Gastrocnemius medialis (tissue), 4 donors: ENCODE measurements at regions of chr9 and their contacts with region 1.

Region 1: GRCh38 chr9:15135164-15135792 is 171.7 kb downstream of the TTC39B start:
- DNase-seq: peak; percentile 20 to 44
- ATAC-seq: peak; percentile 89 to 92
- H3K4me3 ChIP-seq: peak overlapping the region; percentile 8 to 37 (median 31)
- H3K27ac ChIP-seq: no peak overlapping the region
- H3K4me1 ChIP-seq: no peaks in the 10 kb centered on the region
- H3K27me3 ChIP-seq: no peaks in the 10 kb centered on the region
- CTCF ChIP-seq: peak; percentile 69 to 92 (median 84)
- POLR2A ChIP-seq: no peak

Region 2: DNA sequence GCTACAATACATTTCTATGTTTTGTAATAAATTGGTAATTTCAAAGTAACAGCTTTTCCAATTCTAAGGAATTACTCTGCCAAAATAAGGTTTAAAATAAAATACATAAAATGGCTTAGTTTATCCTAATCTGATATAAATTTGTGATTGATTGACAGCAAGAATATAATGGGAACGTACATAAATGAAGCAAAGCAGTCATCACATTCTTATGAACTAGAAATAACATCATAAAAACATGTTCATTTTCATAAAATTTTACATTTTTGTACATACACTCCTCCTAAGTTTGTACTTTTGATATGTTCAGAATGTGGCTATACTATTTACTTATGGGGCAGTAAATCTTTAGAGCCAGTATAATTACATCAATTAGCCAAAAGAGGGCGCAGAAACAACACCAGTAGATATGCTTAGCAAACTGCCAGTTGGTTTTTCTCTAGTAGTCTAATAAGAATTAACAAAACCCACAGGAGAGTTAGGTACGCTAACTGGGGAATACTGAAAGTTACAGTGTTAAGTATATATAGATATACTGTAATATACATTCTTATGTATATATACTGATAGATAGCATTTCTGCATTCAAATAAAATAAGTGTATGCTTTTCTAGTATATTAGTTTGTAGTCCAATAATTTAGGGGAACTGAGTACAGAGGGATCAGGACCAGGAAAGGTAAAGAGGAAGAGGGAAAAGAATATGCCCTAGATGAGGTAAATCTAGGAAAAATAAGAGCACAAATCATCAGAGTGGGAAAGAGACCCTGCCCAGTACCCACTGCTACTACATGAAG is 518.9 kb before region 1 on chr9:
- in situ Hi-C with region 1: loop called in 1 of 4 experiments (anchors 25 kb)
- intact Hi-C with region 1: loop called (anchors 5 kb)
- DNase-seq: no peak
- ATAC-seq: peak in 1 of 2 donors; percentile 61
- H3K4me3 ChIP-seq: no peak overlapping the region
- H3K27ac ChIP-seq: no peak overlapping the region
- H3K4me1 ChIP-seq: no peaks in the 10 kb centered on the region
- H3K27me3 ChIP-seq: no peaks in the 10 kb centered on the region
- CTCF ChIP-seq: peak in 4 of 5 experiments; percentile 38 to 66 (median 46)
- POLR2A ChIP-seq: no peak

Region 3: DNA sequence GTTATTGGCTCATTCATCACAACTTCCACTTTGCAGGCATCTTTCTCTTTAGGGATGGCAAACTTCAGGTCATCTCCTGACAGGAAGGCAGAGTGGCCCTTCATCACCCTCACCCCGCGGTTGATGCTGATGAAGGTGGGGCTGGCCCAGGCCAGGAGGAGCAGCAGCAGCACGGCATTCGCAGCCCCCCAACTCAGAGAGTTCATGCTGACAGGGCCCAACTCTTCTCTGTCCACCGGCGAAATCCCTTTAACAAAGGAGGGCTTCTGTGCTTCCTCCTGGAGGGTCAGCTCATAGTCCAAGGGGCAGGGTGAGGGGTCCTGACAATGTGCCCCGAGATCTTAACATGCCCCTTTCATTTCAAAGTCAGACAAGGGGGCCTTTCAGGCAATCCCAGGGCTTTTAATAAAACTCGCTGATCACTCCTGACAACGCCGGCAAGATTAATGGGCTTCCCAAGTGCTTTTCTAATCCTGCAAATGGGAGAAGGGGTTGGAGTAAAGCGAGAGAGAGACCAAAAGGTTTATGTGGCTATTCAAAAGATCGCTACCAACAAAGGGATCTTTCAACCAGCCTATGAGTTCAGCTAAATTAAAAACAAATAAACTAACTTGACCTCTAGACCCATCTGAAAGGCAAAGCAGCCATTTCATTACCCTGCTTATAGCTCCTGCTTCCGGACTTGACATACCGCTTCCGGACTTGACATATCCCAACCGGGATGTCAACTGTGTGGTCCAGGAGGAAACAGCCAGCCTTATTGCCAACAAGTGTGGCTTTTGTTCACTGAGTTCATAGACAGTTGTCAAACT is 266.3 kb before region 1 on chr9:
- in situ Hi-C with region 1: loop called in 1 of 4 experiments (anchors 25 kb)
- intact Hi-C with region 1: loop called (anchors 10 kb)
- DNase-seq: no peak
- ATAC-seq: no peak
- H3K4me3 ChIP-seq: no peak overlapping the region
- H3K27ac ChIP-seq: no peak overlapping the region
- H3K4me1 ChIP-seq: no peaks in the 10 kb centered on the region
- H3K27me3 ChIP-seq: no peaks in the 10 kb centered on the region
- CTCF ChIP-seq: no peak
- POLR2A ChIP-seq: no peak

Region 4: GRCh38 chr9:15032860-15033259 is 102.4 kb before region 1 on chr9:
- in situ Hi-C with region 1: loop called in 1 of 4 experiments (anchors 25 kb)
- intact Hi-C with region 1: no loop called
- DNase-seq: no peak
- ATAC-seq: no peak
- H3K4me3 ChIP-seq: no peak overlapping the region
- H3K27ac ChIP-seq: no peak overlapping the region
- H3K4me1 ChIP-seq: no peaks in the 10 kb centered on the region
- H3K27me3 ChIP-seq: no peaks in the 10 kb centered on the region
- CTCF ChIP-seq: no peak
- POLR2A ChIP-seq: no peak

Region 5: GRCh38 chr9:15104826-15105420 is 30.4 kb before region 1 on chr9:
- in situ Hi-C with region 1: loop called in 3 of 4 experiments (anchors 5 kb)
- intact Hi-C with region 1: loop called (anchors 1 kb)
- DNase-seq: peak in 1 of 2 donors; percentile 8
- ATAC-seq: peak; percentile 73 to 84
- H3K4me3 ChIP-seq: no peak overlapping the region
- H3K27ac ChIP-seq: no peak overlapping the region
- H3K4me1 ChIP-seq: no peaks in the 10 kb centered on the region
- H3K27me3 ChIP-seq: no peaks in the 10 kb centered on the region
- CTCF ChIP-seq: peak; percentile 57 to 77 (median 75)
- POLR2A ChIP-seq: no peak